ENCODE measurements at regions of chr11 and their contacts with region 1.

Region 1: DNA sequence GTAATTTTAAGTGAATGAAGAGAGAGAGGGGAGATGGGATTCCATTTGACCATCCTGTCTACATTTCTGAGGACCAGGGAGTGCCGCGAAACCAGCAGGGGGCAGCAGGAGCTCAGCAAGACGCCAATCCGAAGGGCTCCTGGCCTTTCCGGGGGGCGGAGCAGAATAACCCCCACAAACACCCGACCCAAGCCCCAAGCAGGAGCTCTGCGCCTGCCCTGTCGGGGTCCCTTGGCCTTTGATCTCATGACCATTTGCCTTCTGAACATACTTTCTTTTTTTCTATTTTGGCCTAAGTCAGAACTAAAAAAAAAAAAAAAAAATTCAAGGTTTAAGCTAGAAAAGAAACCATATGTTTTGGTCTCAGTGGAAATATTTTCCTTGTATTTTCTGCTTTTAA is 21.9 kb upstream of the SCN2B start:
- DNase-seq: peak; percentile 92
- ATAC-seq: peak; percentile 40
- H3K4me3 Mint-ChIP-seq: no peak overlapping the region
- H3K27ac Mint-ChIP-seq: peak overlapping the region; percentile 78
- H3K4me1 Mint-ChIP-seq: peaks cover 14% of the 10 kb centered on the region
- H3K27me3 Mint-ChIP-seq: no peaks in the 10 kb centered on the region

Region 2: GRCh38 chr11:118171269-118172062 is 26.9 kb before region 1 on chr11:
- CTCF ChIA-PET with region 1: interaction called, 14 read pairs
- DNase-seq: peak; percentile 77
- ATAC-seq: peak; percentile 87
- H3K4me3 Mint-ChIP-seq: no peak overlapping the region
- H3K27ac Mint-ChIP-seq: no peak overlapping the region
- H3K4me1 Mint-ChIP-seq: peaks cover 2% of the 10 kb centered on the region
- H3K27me3 Mint-ChIP-seq: peaks cover 38% of the 10 kb centered on the region

Region 3: GRCh38 chr11:118240999-118241768 is 42.8 kb after region 1 on chr11:
- CTCF ChIA-PET with region 1: interaction called, 80 read pairs
- DNase-seq: peak; percentile 88
- ATAC-seq: peak; percentile 89
- H3K4me3 Mint-ChIP-seq: peak overlapping the region; percentile 71
- H3K27ac Mint-ChIP-seq: peak overlapping the region; percentile 97
- H3K4me1 Mint-ChIP-seq: peaks cover 91% of the 10 kb centered on the region
- H3K27me3 Mint-ChIP-seq: no peaks in the 10 kb centered on the region

Region 4: GRCh38 chr11:118277306-118277705 is 78.9 kb after region 1 on chr11:
- CTCF ChIA-PET with region 1: interaction called, 16 read pairs
- DNase-seq: peak; percentile 55
- ATAC-seq: peak; percentile 69
- H3K4me3 Mint-ChIP-seq: no peak overlapping the region
- H3K27ac Mint-ChIP-seq: no peak overlapping the region
- H3K4me1 Mint-ChIP-seq: peaks cover 36% of the 10 kb centered on the region
- H3K27me3 Mint-ChIP-seq: no peaks in the 10 kb centered on the region

Region 5: DNA sequence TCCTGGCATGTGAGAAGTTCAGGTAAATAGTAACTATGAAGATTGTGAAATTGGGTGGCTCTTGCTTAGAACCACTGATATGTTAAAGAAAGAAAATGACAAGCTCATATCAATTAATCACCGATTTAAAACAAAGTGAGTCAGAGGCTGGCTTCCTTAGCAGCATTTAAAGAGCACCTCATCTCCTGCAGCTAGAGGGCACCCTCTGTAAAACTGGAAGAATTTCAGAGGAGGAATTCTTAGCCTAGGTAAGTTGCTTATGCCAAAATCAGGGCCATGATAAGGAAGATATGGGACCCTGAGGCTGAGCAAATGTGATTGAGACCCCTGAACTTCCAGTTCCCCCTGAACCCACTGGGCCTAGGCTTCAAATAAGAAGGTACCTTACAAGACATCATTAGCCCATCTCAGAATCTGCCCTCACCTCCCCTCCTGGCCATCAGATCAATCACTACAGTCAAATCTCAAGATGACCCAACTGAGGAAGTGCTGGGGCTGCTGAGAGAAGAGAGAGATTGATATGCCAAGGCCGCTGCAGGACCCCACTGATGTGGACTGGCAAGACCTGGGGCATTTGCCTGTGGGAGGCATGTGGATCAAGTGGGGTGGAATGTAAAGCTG is 97.6 kb after region 1 on chr11:
- CTCF ChIA-PET with region 1: interaction called, 33 read pairs
- DNase-seq: peak; percentile 58
- ATAC-seq: peak; percentile 83
- H3K4me3 Mint-ChIP-seq: no peak overlapping the region
- H3K27ac Mint-ChIP-seq: no peak overlapping the region
- H3K4me1 Mint-ChIP-seq: peaks cover 18% of the 10 kb centered on the region
- H3K27me3 Mint-ChIP-seq: no peaks in the 10 kb centered on the region

Region 6: DNA sequence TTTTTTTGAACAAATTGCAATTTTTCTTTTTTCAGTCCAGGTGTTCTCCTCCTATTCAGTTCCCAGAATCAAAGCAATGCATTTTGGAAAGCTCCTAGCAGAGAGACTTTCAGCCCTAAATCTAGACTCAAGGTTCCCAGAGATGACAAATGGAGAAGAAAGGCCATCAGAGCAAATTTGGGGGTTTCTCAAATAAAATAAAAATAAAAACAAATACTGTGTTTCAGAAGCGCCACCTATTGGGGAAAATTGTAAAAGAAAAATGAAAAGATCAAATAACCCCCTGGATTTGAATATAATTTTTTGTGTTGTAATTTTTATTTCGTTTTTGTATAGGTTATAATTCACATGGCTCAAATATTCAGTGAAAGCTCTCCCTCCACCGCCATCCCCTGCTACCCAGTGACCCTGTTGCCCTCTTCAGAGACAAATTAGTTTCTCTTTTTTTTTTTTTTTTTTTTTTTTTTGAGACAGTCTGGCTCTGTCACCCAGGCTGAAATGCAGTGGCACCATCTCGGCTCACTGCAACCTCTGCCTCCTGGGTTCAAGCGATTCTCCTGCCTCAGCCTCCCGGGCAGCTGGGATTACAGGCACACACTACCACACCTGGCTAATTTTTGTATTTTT is 154.8 kb after region 1 on chr11:
- CTCF ChIA-PET with region 1: interaction called, 23 read pairs
- DNase-seq: no peak
- ATAC-seq: peak; percentile 20
- H3K4me3 Mint-ChIP-seq: no peak overlapping the region
- H3K27ac Mint-ChIP-seq: peak overlapping the region; percentile 66
- H3K4me1 Mint-ChIP-seq: peaks cover 30% of the 10 kb centered on the region
- H3K27me3 Mint-ChIP-seq: no peaks in the 10 kb centered on the region

Measured in activated CD8-positive, alpha-beta memory T cell treated with anti-CD3 and anti-CD28 coated beads, Interleukin-2, amount 10 ng/mL, durations not matched to agents 7 days and 5 days (primary cell).